Posterior vena cava (tissue), 2 donors: ENCODE measurements at regions of chr3 and their contacts with region 1.

Region 1: GRCh38 chr3:4290272-4290893 is 12.8 kb upstream of the SETMAR start:
- DNase-seq: no peak

Region 2: GRCh38 chr3:3200632-3201212 is 1089.7 kb before region 1 on chr3:
- intact Hi-C with region 1: loop called (anchors 5 to 10 kb)
- DNase-seq: no peak

Region 3: DNA sequence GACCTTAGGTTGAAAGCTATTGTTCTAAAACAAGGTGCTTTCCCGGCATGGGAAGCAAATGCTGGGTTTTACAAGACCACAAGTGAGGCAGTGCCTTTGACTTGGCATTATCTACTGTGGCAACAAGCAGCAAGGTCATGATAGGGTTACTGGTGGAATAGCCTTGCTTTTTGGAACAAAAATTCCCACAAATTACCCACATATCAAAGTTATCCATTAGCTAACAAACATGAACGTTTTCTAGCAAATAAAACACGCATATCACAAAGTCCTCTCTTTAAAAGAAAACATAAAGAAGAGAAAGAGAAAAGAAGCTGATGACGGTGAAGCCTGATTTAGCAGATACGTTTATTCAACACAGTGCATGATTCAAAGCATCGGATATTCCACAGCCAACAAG is 70.4 kb after region 1 on chr3:
- intact Hi-C with region 1: no loop called
- DNase-seq: no peak